Posterior cingulate gyrus (tissue), 11 donors: ENCODE measurements at regions of chr7 and their contacts with region 1.

Region 1: DNA sequence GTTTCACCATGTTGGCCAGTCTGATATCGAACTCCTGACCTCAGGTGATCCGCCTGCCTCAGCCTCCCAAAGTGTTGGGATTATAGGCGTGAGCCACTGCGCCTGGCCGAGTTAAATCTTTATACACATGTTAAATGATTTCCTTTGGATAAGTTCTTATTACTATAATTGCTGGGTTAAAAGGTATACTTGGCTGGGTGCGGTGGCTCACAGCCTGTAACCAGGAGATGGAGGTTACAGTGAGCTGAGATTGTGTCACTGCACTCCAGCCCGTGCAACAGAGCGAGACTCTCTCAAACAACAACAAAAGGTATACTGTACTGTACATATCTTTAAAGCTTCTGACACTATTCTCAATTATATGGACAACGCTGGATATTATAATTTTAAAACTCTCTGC is 53.2 kb upstream of the CDK13 start:
- DNase-seq: no peak

Region 2: GRCh38 chr7:39285256-39285655 is 611.6 kb before region 1 on chr7:
- intact Hi-C with region 1: no loop called
- DNase-seq: no peak

Region 3: DNA sequence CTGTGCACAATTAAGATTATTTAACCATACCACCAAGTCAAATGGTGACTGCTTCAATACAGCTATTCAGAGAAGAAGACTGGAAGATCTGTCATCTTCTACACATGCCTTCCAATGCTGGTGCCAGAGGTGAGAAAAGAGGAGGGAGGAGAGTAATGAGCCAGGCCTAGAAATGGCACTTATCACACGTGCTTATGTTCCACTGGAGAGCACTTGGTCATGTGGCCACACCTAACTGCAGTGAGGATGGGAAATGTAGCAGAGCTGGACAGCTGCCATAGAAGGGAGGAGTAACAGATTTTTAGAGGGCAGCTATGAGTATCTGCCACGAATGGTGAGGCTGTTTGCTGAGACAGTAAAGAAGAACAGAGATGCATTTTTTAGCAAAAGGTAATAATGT is 160.5 kb after region 1 on chr7:
- intact Hi-C with region 1: loop called (anchors 1 kb)
- DNase-seq: no peak